ENCODE measurements at regions of chr7 and their contacts with region 1.

Region 1: DNA sequence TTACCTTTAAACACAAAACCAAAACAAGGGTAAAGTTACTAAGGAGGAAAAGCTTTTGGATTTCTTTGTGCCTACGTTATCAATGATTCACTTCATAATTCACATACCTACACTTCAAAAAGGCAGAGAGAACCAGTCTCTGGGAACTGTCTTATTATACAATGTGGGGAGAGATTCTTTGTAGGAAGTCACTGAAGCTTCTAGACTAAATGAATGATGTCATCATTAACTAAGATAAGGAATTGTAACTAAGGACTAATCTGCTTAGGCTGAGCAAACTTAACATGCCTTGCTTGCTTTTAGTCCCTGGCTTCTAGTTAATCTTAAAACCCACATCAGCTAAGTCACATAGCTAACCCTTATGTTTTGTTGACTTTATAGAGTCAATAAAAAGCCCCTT is 771.2 kb downstream of the NXPH1 start:
- DNase-seq: no peak
- H3K4me3 ChIP-seq: no peak overlapping the region
- H3K27ac ChIP-seq: no peak overlapping the region
- H3K4me1 ChIP-seq: no peaks in the 10 kb centered on the region
- H3K27me3 ChIP-seq: no peaks in the 10 kb centered on the region
- CTCF ChIP-seq: no peak
- EP300 ChIP-seq: no peak
- POLR2A ChIP-seq: no peak

Region 2: DNA sequence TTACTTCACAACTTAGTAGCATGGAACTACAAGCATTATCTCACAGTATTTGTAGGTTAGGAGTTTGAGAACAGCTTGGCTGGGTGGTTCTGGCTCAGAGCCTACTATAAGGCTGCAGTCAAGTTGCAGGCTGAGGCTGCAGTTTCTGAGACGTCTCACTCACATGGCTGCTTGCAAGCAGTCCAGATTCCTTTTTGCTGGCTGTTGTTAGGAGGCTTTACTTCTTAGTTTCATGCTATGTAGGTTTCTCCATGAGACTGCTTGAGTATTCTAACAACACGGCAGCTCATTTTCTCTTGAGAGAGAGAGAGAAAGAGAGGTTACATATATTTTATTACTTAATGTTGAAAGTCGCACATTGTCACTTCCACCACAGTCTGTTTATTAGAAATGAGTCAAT is 302.7 kb after region 1 on chr7:
- intact Hi-C with region 1: loop called (anchors 10 kb)
- DNase-seq: no peak
- H3K4me3 ChIP-seq: no peak overlapping the region
- H3K27ac ChIP-seq: no peak overlapping the region
- H3K4me1 ChIP-seq: no peaks in the 10 kb centered on the region
- H3K27me3 ChIP-seq: no peaks in the 10 kb centered on the region
- CTCF ChIP-seq: no peak
- EP300 ChIP-seq: no peak
- POLR2A ChIP-seq: no peak

Measured in esophagus muscularis mucosa (tissue), 4 donors.